Activated naive CD4-positive, alpha-beta T cell treated with anti-CD3 and anti-CD28 coated beads for 36 hours (primary cell): ENCODE measurements at regions of chr11 and their contacts with region 1.

Region 1: DNA sequence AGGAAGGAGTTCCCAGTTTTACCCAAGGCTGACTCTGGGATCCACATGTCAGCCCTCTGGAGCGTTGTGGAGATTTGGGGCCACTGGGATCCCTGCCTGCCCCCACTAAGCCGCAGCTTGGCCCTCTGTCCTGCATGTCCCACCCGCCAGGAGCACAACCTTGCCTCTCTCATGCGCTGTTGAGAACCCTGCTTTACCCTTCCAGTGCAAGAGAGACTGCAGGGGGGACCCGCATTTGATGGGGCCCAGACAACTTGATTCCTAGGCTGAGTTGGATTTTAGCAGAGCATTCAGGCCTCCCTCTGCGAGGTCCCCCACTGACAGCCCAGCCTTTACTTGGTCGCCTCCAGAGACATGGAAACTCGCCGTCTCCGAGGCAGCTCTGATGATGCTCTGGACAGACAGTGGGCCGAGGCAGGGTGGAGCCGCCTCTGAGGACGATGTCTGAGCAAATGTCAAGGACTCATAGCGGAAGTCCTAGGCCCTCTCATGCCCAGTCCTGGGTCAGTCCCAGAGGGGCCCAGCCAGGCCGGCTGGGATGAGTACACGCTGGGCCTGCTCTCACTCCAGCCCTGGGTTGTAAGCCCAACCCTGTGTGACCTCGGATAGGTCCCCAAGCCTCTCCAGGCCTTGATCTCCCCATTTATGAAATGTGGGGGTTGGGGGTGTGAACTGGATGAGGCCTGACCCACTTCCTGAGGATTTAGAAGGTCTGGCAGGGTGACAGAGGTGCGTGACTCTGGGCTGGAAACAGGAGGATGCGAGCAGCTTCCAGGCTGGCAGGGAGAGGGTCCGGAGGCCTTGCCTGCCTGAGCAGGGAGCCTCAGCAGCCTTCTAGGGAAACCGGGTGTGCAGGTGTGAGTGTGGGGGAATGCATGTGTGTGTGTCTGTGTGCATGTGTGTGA is 630 bp downstream of the CD5 start:
- DNase-seq: peak; percentile 67
- H3K4me3 Mint-ChIP-seq: no peak overlapping the region
- H3K27ac Mint-ChIP-seq: no peak overlapping the region
- H3K4me1 Mint-ChIP-seq: peaks cover 31% of the 10 kb centered on the region
- H3K27me3 Mint-ChIP-seq: no peaks in the 10 kb centered on the region

Region 2: GRCh38 chr11:60657888-60658287 is 445.0 kb before region 1 on chr11:
- CTCF ChIA-PET with region 1: no interaction called
- intact Hi-C with region 1: no loop called
- DNase-seq: no peak
- H3K4me3 Mint-ChIP-seq: no peak overlapping the region
- H3K27ac Mint-ChIP-seq: no peak overlapping the region
- H3K4me1 Mint-ChIP-seq: no peaks in the 10 kb centered on the region
- H3K27me3 Mint-ChIP-seq: peaks cover 7% of the 10 kb centered on the region

Region 3: DNA sequence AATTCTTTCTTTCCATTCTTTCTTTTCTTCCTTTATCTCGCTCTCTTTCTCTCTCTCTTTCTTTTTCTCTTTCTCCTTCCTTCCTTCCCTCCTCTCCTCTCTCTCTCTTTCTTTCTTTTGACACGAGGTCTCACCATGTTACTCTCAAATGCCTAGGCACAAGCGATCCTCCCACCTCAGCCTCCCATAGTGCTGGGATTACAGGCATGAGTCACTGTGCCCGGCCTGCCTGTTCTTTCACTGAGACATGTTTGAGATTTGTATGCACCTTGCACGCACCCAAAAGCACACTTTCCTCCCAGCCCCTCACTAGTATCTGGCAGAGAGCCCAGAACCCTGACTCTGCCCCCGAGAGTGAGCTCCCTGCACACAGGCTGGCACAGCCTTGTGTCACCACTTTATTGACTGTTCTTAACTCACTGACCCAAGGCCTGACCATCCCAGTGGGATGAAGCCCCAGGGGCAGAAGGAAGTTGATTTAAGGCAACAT is 74.6 kb before region 1 on chr11:
- CTCF ChIA-PET with region 1: no interaction called
- intact Hi-C with region 1: loop called (anchors 1 kb)
- DNase-seq: peak; percentile 93
- H3K4me3 Mint-ChIP-seq: peak overlapping the region; percentile 87
- H3K27ac Mint-ChIP-seq: peak overlapping the region; percentile 100
- H3K4me1 Mint-ChIP-seq: peaks cover 82% of the 10 kb centered on the region
- H3K27me3 Mint-ChIP-seq: no peaks in the 10 kb centered on the region

Region 4: DNA sequence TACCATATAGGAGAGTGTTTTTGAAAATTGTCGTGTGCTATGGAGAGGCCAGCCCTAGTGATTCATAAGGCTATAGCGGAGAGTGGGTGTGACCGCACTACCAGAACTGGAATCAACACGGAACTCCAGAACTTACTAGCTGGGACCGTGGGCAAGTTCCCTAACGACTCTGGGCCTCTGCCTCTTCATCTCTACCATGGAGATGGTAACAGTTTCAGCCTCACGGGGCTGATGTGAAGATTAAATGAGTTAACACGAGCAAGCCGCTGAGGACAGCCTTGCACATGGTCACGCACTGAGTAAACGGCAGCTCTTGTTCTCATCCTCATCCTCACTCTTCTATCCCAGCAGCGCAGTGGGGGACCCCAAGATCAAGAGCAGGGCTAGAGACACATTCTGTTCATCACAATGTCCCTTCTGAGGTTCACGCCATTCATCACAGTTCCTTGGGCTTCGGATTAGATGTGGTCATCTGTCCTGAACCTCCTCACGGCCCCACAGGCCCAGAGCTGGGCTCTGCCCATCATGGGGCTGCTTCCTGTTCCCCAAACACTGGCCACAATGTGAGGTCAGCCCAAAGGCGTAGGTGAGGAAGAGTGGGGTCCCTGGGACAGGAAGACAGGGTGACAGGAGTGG is 47.9 kb before region 1 on chr11:
- CTCF ChIA-PET with region 1: no interaction called
- intact Hi-C with region 1: no loop called
- DNase-seq: peak; percentile 60
- H3K4me3 Mint-ChIP-seq: no peak overlapping the region
- H3K27ac Mint-ChIP-seq: peak overlapping the region; percentile 80
- H3K4me1 Mint-ChIP-seq: peaks cover 81% of the 10 kb centered on the region
- H3K27me3 Mint-ChIP-seq: no peaks in the 10 kb centered on the region

Region 5: GRCh38 chr11:61091373-61092279 is 11.3 kb before region 1 on chr11:
- CTCF ChIA-PET with region 1: interaction called, 8 read pairs
- intact Hi-C with region 1: loop called (anchors 1 kb)
- DNase-seq: peak; percentile 84
- H3K4me3 Mint-ChIP-seq: peak overlapping the region; percentile 92
- H3K27ac Mint-ChIP-seq: peak overlapping the region; percentile 99
- H3K4me1 Mint-ChIP-seq: peaks cover 61% of the 10 kb centered on the region
- H3K27me3 Mint-ChIP-seq: no peaks in the 10 kb centered on the region

Region 6: DNA sequence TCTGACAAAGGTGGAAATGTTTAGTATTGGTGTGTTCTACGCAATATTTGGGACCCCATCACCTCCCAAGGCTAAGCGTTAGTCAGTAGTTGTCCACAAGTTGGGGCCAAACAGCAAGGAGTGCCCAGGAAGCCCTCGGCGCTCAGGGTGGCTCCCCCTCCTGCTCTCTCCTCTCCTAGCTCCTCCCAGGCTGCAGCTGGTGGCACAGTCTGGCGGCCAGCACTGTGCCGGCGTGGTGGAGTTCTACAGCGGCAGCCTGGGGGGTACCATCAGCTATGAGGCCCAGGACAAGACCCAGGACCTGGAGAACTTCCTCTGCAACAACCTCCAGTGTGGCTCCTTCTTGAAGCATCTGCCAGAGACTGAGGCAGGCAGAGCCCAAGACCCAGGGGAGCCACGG is 16.1 kb after region 1 on chr11:
- CTCF ChIA-PET with region 1: interaction called, 3 read pairs
- intact Hi-C with region 1: loop called (anchors 2 kb)
- DNase-seq: no peak
- H3K4me3 Mint-ChIP-seq: peak overlapping the region; percentile 39
- H3K27ac Mint-ChIP-seq: peak overlapping the region; percentile 67
- H3K4me1 Mint-ChIP-seq: peaks cover 73% of the 10 kb centered on the region
- H3K27me3 Mint-ChIP-seq: no peaks in the 10 kb centered on the region